ENCODE measurements at regions of chr11 and their contacts with region 1.

Region 1: GRCh38 chr11:45655347-45655756 is 10.1 kb downstream of the CHST1 start:
- DNase-seq: peak in 2 of 3 donors; percentile 76 to 79
- ATAC-seq: peak; percentile 77
- H3K4me3 ChIP-seq: no peak overlapping the region
- H3K4me1 ChIP-seq: no peaks in the 10 kb centered on the region
- CTCF ChIP-seq: peak; percentile 87

Region 2: DNA sequence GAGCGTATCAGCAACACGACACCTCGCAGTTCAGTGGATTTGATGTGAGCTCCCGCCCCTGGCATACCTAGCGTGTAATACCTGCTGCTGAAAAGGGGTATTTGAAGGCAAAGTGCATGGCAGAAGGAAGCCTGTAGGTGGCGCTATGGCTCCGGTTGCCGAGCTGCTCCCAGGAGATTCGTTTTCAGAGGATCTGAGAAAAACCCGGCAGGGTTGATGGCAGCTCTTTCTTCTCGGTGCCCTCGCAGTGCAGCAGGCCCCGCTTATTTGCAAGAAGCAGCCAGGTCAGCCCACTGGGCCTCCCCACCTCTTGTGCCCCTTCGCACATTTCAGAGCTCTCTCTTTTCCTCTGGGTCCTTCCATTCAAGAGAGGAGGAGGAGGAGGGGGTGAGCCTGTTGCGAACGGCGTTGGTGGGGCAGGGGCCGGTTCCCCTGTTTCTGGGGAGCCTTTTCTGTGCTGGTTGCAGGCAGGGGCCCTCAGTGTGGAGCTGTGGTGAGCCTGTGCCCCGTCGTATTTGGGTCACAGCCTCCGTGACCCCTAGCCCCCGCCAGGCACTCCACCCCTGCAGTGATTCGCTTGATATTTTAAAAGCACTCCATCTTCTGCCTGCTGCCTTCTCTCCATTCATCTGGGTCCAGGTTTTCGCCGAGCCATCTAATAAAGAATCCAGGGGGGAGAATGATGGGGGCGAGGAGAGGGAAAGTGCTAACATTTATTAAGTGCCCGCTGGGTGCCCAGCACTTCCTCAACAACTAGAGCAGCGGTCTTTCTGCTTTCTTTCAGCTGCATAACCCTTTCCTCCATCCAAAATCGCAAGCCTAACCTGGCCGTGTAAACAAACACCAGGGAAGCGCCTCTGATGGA is 283.9 kb before region 1 on chr11:
- intact Hi-C with region 1: loop called (anchors 5 to 10 kb)
- DNase-seq: peak in 2 of 3 donors; percentile 53 to 72
- ATAC-seq: peak; percentile 75
- H3K4me3 ChIP-seq: no peak overlapping the region
- H3K4me1 ChIP-seq: no peaks in the 10 kb centered on the region
- CTCF ChIP-seq: peak; percentile 55

Region 3: GRCh38 chr11:46134540-46134939 is 479.2 kb after region 1 on chr11:
- intact Hi-C with region 1: no loop called
- DNase-seq: no peak
- ATAC-seq: no peak
- H3K4me3 ChIP-seq: no peak overlapping the region
- H3K4me1 ChIP-seq: no peaks in the 10 kb centered on the region
- CTCF ChIP-seq: no peak